Posterior cingulate gyrus (tissue), 11 donors: ENCODE measurements at regions of chr3 and their contacts with region 1.

Region 1: GRCh38 chr3:189967254-189967865 is 153.3 kb downstream of the P3H2 start:
- DNase-seq: no peak

Region 2: GRCh38 chr3:190224863-190225692 is 257.7 kb after region 1 on chr3:
- intact Hi-C with region 1: no loop called
- DNase-seq: no peak

Region 3: DNA sequence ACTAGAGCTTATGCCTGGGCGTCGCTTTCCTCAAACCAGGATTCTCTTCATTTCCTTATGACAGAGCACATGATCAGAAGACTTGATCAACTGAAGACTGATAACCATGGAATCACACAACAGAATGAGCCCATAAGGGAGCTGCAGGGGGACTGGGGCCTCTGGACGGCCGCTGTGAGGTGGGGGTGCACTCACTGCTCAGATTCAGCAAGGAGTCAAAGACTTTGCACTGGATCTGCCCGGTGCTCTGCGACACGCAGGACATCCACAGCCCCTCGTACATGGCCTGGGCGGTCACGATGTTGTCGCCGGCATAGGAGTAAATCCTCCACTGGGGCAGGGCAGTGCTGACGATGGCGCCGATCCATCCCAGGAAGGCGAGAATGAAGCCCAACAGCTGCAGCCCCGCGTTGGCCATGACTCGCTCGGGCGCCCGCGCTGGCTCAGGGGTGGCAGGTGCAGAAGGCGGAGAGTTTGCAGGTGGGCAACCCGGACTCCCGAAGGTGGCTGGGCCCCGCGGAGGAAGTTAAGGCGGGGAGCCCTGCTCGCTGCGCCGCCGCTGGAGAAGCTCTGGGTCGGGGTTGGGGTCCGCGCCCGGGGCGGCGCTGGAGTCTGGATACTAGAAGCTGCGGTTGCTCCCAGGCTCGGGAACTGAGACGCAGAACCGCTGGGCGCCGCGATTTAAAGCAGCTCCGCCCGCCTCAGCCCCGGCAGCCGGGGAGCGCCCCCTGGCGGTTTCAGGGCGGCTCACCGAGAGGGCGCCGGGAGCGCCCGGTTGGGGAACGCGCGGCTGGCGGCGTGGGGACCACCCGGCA is 354.6 kb after region 1 on chr3 and contains the start of gene CLDN1:
- intact Hi-C with region 1: loop called (anchors 5 kb)
- DNase-seq: peak; percentile 56 to 96 (median 76)